Caco-2 (cell line): ENCODE measurements at regions of chr15 and their contacts with region 1.

Region 1: GRCh38 chr15:90412356-90413194 is 24.5 kb downstream of the IQGAP1 start:
- DNase-seq: peak; percentile 77 to 85
- H3K4me3 ChIP-seq: no peak overlapping the region
- H3K4me3 Mint-ChIP-seq: peak overlapping the region; percentile 59
- H3K27ac Mint-ChIP-seq: peak overlapping the region; percentile 88
- H3K4me1 ChIP-seq: peaks cover 50% of the 10 kb centered on the region
- H3K4me1 Mint-ChIP-seq: peaks cover 57% of the 10 kb centered on the region
- H3K27me3 ChIP-seq: no peaks in the 10 kb centered on the region
- H3K27me3 Mint-ChIP-seq: no peaks in the 10 kb centered on the region
- CTCF ChIP-seq: no peak

Region 2: DNA sequence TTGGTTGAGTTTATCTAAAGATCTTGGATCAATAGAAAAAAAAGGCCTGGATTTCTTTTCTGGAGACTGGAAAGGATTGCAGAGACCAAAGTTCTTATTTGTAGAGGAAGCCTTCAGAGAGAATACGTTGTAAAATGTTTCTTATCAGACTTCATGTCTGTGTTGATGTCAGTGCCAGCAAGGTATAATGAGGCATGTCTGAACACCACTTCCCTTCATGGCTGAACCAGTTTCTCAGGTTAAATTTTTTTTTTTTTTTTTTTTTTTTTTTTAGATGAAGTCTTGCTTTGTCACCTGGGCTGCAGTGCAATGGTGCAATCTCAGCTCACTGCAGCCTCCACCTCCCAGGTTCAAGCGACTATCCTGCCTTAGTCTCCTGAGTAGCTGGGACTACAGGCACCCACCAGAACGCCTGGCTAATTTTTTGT is 78.3 kb before region 1 on chr15:
- CTCF ChIA-PET with region 1: no interaction called
- POLR2A ChIA-PET with region 1: no interaction called
- intact Hi-C with region 1: loop called (anchors 1 kb)
- DNase-seq: peak; percentile 80 to 82
- H3K4me3 ChIP-seq: no peak overlapping the region
- H3K4me3 Mint-ChIP-seq: peak overlapping the region; percentile 59
- H3K27ac Mint-ChIP-seq: peak overlapping the region; percentile 83
- H3K4me1 ChIP-seq: peaks cover 48% of the 10 kb centered on the region
- H3K4me1 Mint-ChIP-seq: peaks cover 24% of the 10 kb centered on the region
- H3K27me3 ChIP-seq: no peaks in the 10 kb centered on the region
- H3K27me3 Mint-ChIP-seq: no peaks in the 10 kb centered on the region
- CTCF ChIP-seq: no peak

Region 3: DNA sequence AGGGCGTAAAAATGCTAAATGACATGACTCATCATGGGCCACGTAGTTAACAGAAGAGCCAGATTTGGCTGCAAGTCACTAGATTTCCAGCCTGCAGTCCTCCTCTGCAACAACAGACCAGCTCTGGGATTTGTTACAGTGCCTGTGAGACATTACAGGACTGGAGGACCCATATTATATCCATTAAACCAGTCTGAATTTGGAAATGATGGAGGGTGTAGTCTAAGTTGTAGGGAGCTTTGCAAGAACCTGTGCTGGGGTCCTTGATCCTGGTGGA is 49.7 kb before region 1 on chr15:
- CTCF ChIA-PET with region 1: no interaction called
- POLR2A ChIA-PET with region 1: interaction called, 4 read pairs
- intact Hi-C with region 1: loop called (anchors 2 kb)
- DNase-seq: no peak
- H3K4me3 ChIP-seq: no peak overlapping the region
- H3K4me3 Mint-ChIP-seq: no peak overlapping the region
- H3K27ac Mint-ChIP-seq: no peak overlapping the region
- H3K4me1 ChIP-seq: peaks cover 34% of the 10 kb centered on the region
- H3K4me1 Mint-ChIP-seq: peaks cover 20% of the 10 kb centered on the region
- H3K27me3 ChIP-seq: no peaks in the 10 kb centered on the region
- H3K27me3 Mint-ChIP-seq: no peaks in the 10 kb centered on the region
- CTCF ChIP-seq: no peak

Region 4: DNA sequence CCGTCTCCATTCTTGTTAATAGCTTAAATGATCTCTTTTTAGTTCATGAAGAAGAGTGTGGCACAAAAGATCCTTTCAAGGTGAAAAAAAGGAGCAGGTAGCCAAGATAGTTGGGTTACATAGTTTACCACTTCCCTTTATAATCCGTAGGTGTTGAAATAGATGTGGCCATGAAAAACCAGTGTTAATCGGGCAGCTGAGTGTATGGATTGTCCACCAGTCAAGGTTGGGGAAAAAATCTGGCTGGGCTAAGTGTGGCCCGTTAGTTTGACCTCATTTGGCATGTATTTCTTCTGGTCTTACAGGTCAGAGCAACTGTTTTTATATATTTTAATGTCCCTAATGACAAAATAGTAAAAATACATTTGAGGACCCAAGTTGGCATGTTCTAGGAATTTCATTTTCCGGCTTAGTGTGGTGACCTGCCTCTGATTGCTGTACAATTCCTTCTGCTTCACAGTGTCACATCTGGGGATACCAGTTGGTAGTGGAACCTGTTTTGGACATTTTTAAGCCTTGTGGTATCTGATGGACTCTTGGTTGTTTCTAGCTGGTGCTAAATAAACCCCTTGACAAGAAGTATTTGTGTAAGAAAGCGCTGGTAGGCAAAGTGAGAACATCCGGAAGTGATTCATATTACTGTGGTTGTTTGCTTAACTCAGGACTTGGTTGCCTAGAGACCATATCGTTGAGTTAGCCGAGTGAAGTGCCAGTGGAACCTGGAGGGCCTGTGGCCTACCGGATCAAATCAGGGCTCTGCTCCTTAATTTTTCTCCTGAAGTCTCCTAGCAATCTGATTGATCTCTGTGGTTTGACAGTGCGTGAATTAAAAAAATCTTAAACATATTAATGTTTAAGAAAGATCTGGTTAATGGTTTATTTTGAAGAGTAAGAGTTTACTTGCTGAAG is 11.9 kb before region 1 on chr15:
- CTCF ChIA-PET with region 1: no interaction called
- POLR2A ChIA-PET with region 1: interaction called, 7 read pairs
- intact Hi-C with region 1: loop called (anchors 1 kb)
- DNase-seq: peak; percentile 80 to 84
- H3K4me3 ChIP-seq: no peak overlapping the region
- H3K4me3 Mint-ChIP-seq: peak overlapping the region; percentile 33
- H3K27ac Mint-ChIP-seq: peak overlapping the region; percentile 96
- H3K4me1 ChIP-seq: peaks cover 41% of the 10 kb centered on the region
- H3K4me1 Mint-ChIP-seq: peaks cover 34% of the 10 kb centered on the region
- H3K27me3 ChIP-seq: no peaks in the 10 kb centered on the region
- H3K27me3 Mint-ChIP-seq: no peaks in the 10 kb centered on the region
- CTCF ChIP-seq: no peak

Region 5: GRCh38 chr15:90482124-90483011 is 69.8 kb after region 1 on chr15:
- CTCF ChIA-PET with region 1: interaction called, 4 read pairs
- POLR2A ChIA-PET with region 1: interaction called, 3 read pairs
- intact Hi-C with region 1: loop called (anchors 1 kb)
- DNase-seq: peak; percentile 50 to 62
- H3K4me3 ChIP-seq: no peak overlapping the region
- H3K4me3 Mint-ChIP-seq: no peak overlapping the region
- H3K27ac Mint-ChIP-seq: no peak overlapping the region
- H3K4me1 ChIP-seq: peaks cover 29% of the 10 kb centered on the region
- H3K4me1 Mint-ChIP-seq: peaks cover 34% of the 10 kb centered on the region
- H3K27me3 ChIP-seq: no peaks in the 10 kb centered on the region
- H3K27me3 Mint-ChIP-seq: no peaks in the 10 kb centered on the region
- CTCF ChIP-seq: peak; percentile 80 to 82